ENCODE measurements at regions of chr10 and their contacts with region 1.

Region 1: GRCh38 chr10:458421-458851 is 231.0 kb downstream of the DIP2C start:
- DNase-seq: no peak
- H3K4me3 ChIP-seq: no peak overlapping the region
- H3K27ac ChIP-seq: peak overlapping the region in 1 of 2 donors; percentile 38
- H3K4me1 ChIP-seq: no peaks in the 10 kb centered on the region
- H3K27me3 ChIP-seq: no peaks in the 10 kb centered on the region
- CTCF ChIP-seq: no peak
- POLR2A ChIP-seq: no peak

Region 2: DNA sequence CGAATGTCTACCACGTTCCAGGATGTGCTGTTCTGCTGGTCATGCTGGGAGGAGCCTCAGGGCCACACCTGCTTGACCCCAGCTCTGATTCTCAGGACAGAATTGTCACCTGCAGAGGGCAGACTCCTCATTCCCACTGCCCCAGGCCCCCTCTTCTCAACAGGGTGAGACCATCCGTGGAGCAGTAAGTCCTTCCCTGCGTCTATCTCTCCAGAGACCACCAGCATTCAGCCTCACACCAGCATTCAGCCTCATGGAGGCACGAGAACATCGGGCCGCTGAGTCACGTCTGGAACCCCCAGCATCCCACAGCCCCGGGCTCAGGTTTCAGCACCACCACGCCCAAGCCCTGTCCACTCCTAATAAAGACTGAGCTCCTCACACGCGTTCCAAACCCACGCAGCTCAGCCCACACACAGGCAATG is 42.3 kb before region 1 on chr10:
- intact Hi-C with region 1: loop called (anchors 2 kb)
- DNase-seq: no peak
- H3K4me3 ChIP-seq: no peak overlapping the region
- H3K27ac ChIP-seq: no peak overlapping the region
- H3K4me1 ChIP-seq: no peaks in the 10 kb centered on the region
- H3K27me3 ChIP-seq: no peaks in the 10 kb centered on the region
- CTCF ChIP-seq: no peak
- POLR2A ChIP-seq: no peak

Measured in breast epithelium (tissue), 4 donors.